GM12878 (cell line): ENCODE measurements at regions of chr12 and their contacts with region 1.

Region 1: DNA sequence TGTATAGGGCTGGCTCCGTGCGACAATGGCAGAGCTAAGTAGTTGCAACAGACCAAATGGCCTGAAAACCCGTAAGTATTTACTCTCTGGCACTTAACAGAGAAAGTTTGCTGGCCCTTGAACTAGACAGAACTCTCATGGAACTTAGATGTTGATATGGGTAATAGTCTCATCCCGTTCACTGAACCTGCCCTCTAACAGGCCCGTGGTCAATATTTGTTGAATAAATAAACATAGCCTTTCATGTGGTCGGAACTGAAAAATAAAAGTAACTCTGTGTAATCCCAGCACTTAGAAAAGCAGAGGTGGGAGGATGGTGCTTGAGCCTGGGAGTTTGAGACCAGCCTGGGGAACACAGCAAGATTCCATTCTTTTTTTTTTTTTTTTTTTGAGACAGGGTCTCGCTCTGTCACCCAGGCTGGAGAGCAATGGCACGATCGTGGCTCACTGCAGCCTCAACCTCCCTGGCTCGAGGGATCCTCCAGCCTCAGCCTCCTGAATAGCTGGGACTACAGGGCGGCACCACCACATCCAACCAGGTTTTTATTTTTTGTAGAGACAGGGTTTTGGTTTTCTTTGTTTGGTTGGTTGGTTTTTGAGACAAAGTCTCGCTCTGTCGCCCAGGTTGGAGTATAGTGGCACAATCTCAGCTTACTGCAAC is 29.7 kb downstream of the KDM2B start:
- DNase-seq: no peak
- ATAC-seq: peak; percentile 23
- H3K4me3 ChIP-seq: no peak overlapping the region
- H3K27ac ChIP-seq: no peak overlapping the region
- H3K4me1 ChIP-seq: peaks cover 25% of the 10 kb centered on the region
- H3K27me3 ChIP-seq: no peaks in the 10 kb centered on the region
- CTCF ChIP-seq: no peak
- EP300 ChIP-seq: no peak
- POLR2A ChIP-seq: no peak
- RAD21 ChIP-seq: no peak

Region 2: GRCh38 chr12:121190523-121191031 is 360.5 kb before region 1 on chr12:
- CTCF ChIA-PET with region 1: no interaction called
- POLR2A ChIA-PET with region 1: no interaction called
- RAD21 ChIA-PET with region 1: no interaction called
- SMC1A ChIA-PET with region 1: no interaction called
- in situ Hi-C with region 1: no loop called
- intact Hi-C with region 1: no loop called
- DNase-seq: no peak
- ATAC-seq: peak; percentile 65
- H3K4me3 ChIP-seq: no peak overlapping the region
- H3K27ac ChIP-seq: no peak overlapping the region
- H3K4me1 ChIP-seq: peaks cover 5% of the 10 kb centered on the region
- H3K27me3 ChIP-seq: no peaks in the 10 kb centered on the region
- CTCF ChIP-seq: no peak
- EP300 ChIP-seq: no peak
- POLR2A ChIP-seq: no peak
- RAD21 ChIP-seq: no peak

Region 3: GRCh38 chr12:121287267-121287954 is 263.7 kb before region 1 on chr12:
- CTCF ChIA-PET with region 1: no interaction called
- POLR2A ChIA-PET with region 1: no interaction called
- RAD21 ChIA-PET with region 1: no interaction called
- SMC1A ChIA-PET with region 1: no interaction called
- in situ Hi-C with region 1: no loop called
- intact Hi-C with region 1: no loop called
- DNase-seq: no peak
- ATAC-seq: no peak
- H3K4me3 ChIP-seq: no peak overlapping the region
- H3K27ac ChIP-seq: no peak overlapping the region
- H3K4me1 ChIP-seq: peaks cover 9% of the 10 kb centered on the region
- H3K27me3 ChIP-seq: no peaks in the 10 kb centered on the region
- CTCF ChIP-seq: no peak
- EP300 ChIP-seq: no peak
- POLR2A ChIP-seq: no peak
- RAD21 ChIP-seq: no peak

Region 4: DNA sequence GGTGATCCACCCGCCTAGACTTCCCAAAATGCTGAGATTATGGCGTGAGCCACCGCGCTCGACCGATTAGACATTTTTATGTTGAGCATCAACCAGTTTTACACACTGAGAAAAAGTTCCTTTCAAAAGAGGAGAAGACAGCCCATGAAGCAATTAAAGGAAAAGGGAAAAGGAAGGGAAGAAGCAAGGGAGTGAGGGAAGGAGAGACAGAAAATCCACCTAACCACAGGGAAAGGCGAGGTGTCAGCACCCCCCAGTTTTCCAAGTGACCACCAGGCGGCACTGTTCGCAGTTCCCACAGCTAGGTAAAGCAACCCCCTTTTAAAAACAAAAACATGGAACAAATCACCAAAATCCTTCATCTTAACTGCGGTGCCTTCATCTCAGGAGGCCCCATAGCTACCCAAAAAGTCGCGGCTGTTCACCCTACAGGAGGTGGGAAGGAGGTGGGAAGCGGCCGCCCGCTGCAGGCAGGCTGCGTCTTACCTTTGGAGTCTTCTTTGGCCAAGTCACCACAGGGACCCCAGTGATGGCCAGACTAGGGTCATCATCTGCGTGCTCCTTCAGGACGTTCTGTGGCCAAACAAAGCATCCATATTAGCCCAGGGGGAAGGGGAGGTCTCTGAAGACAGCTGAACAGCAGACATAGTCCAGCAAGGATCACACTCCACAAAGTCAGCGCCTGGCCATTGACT is 56.9 kb before region 1 on chr12:
- CTCF ChIA-PET with region 1: interaction called, 34 read pairs
- POLR2A ChIA-PET with region 1: interaction called, 5 read pairs
- RAD21 ChIA-PET with region 1: interaction called, 13 read pairs
- SMC1A ChIA-PET with region 1: interaction called, 22 read pairs
- in situ Hi-C with region 1: no loop called
- intact Hi-C with region 1: no loop called
- DNase-seq: no peak
- ATAC-seq: peak; percentile 82
- H3K4me3 ChIP-seq: no peak overlapping the region
- H3K27ac ChIP-seq: no peak overlapping the region
- H3K4me1 ChIP-seq: peaks cover 5% of the 10 kb centered on the region
- H3K27me3 ChIP-seq: no peaks in the 10 kb centered on the region
- CTCF ChIP-seq: peak; percentile 70 to 96 (median 95)
- EP300 ChIP-seq: no peak
- POLR2A ChIP-seq: no peak
- RAD21 ChIP-seq: peak; percentile 58

Region 5: DNA sequence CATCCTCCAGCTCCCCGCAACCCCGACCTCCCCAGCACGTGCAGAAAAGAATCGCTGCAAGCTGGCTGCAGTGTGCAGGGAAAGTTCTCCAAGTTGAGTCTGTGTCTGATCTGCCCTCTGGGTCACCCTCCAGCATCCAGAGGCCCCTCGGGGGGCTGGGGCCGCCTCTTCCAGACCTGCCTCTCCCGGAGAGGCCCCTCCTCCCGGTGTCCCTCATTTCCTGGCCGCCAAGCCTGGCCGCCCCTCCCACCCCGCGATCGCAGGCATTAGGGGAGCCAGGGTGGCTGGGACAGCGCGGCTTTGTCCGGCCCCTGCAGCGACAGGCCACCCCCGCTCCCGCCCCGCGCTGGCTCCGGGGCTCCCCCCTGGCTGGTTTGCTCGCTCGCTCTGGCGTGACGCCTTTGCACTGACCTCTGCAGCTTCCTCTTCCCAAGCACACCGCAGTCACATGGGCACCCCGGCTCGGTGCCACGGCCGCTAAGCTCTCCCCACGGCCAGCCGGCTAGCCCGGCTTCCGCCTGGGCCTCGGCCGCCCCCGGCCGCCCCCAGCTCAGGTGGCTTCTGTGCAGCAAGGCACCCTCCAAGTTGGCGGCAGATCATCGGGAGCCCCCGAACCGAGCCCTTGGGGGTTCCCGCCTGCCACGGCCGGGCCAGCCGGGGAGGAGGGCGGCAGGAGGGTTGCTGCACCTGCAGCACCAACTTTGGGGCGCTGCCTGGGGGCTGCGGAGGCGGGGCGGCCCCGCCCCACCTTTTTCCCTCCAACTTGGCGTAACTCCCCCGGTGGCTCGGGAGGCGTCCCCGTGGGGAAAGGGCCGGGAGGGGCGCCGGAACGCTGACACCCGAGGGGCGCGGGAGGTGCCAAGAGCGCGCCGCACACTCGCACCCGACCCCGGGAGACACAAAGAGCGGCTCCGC is 13.9 kb before region 1 on chr12:
- CTCF ChIA-PET with region 1: interaction called, 8 read pairs
- POLR2A ChIA-PET with region 1: interaction called, 37 read pairs
- RAD21 ChIA-PET with region 1: interaction called, 10 read pairs
- SMC1A ChIA-PET with region 1: interaction called, 11 read pairs
- in situ Hi-C with region 1: no loop called
- intact Hi-C with region 1: no loop called
- DNase-seq: peak; percentile 82
- ATAC-seq: peak; percentile 81
- H3K4me3 ChIP-seq: peak overlapping the region; percentile 78
- H3K27ac ChIP-seq: peak overlapping the region; percentile 95
- H3K4me1 ChIP-seq: peaks cover 27% of the 10 kb centered on the region
- H3K27me3 ChIP-seq: no peaks in the 10 kb centered on the region
- CTCF ChIP-seq: no peak
- EP300 ChIP-seq: peak in 1 of 2 experiments; percentile 42; a peak in 2 of 4 replicates
- POLR2A ChIP-seq: peak; percentile 91
- RAD21 ChIP-seq: no peak

Region 6: GRCh38 chr12:121579981-121580868 is 29.1 kb after region 1 on chr12:
- CTCF ChIA-PET with region 1: interaction called, 40 read pairs
- POLR2A ChIA-PET with region 1: interaction called, 13 read pairs
- RAD21 ChIA-PET with region 1: interaction called, 26 read pairs
- SMC1A ChIA-PET with region 1: interaction called, 46 read pairs
- in situ Hi-C with region 1: no loop called
- intact Hi-C with region 1: no loop called
- DNase-seq: no peak
- ATAC-seq: peak; percentile 67
- H3K4me3 ChIP-seq: peak overlapping the region; percentile 77
- H3K27ac ChIP-seq: peak overlapping the region; percentile 59
- H3K4me1 ChIP-seq: peaks cover 19% of the 10 kb centered on the region
- H3K27me3 ChIP-seq: no peaks in the 10 kb centered on the region
- CTCF ChIP-seq: no peak
- EP300 ChIP-seq: no peak
- POLR2A ChIP-seq: peak; percentile 69
- RAD21 ChIP-seq: no peak

Region 7: DNA sequence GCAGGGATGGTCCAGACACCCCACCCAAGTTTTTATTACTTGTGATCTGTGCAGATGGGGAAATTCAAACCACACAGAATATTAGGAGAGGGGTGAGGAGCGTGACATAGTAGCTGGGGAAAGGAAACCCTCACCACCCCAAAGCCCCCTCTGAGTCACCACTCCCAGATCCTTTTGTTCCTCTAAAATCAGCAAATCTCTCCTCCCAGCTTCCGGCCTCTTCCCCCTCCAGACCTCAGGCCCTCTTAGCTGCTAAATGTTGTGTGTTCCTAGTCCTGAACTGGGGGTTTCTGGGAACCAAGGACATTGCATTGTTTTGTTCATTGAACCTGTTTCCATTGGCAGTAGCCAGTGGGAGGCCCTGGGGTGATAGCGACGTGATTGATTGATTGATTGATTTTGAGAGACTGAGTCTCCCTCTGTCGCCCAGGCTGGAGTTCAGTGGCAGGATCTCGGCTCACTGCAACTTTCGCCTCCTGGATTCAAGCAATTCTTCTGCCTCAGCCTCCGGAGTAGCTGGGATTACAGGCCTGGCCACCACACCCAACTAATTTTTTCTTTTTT is 69.3 kb after region 1 on chr12:
- CTCF ChIA-PET with region 1: interaction called, 80 read pairs
- POLR2A ChIA-PET with region 1: interaction called, 20 read pairs
- RAD21 ChIA-PET with region 1: interaction called, 57 read pairs
- SMC1A ChIA-PET with region 1: interaction called, 60 read pairs
- in situ Hi-C with region 1: no loop called
- intact Hi-C with region 1: loop called (anchors 1 kb)
- DNase-seq: no peak
- ATAC-seq: no peak
- H3K4me3 ChIP-seq: no peak overlapping the region
- H3K27ac ChIP-seq: no peak overlapping the region
- H3K4me1 ChIP-seq: peaks cover 3% of the 10 kb centered on the region
- H3K27me3 ChIP-seq: no peaks in the 10 kb centered on the region
- CTCF ChIP-seq: no peak
- EP300 ChIP-seq: no peak
- POLR2A ChIP-seq: no peak
- RAD21 ChIP-seq: no peak

Region 8: GRCh38 chr12:121663610-121663929 is 112.5 kb after region 1 on chr12:
- CTCF ChIA-PET with region 1: interaction called, 76 read pairs
- POLR2A ChIA-PET with region 1: interaction called, 6 read pairs
- RAD21 ChIA-PET with region 1: interaction called, 42 read pairs
- SMC1A ChIA-PET with region 1: interaction called, 55 read pairs
- in situ Hi-C with region 1: no loop called
- intact Hi-C with region 1: loop called (anchors 5 kb)
- DNase-seq: no peak
- ATAC-seq: no peak
- H3K4me3 ChIP-seq: no peak overlapping the region
- H3K27ac ChIP-seq: peak overlapping the region; percentile 99
- H3K4me1 ChIP-seq: peaks cover 20% of the 10 kb centered on the region
- H3K27me3 ChIP-seq: no peaks in the 10 kb centered on the region
- CTCF ChIP-seq: no peak
- EP300 ChIP-seq: no peak
- POLR2A ChIP-seq: no peak
- RAD21 ChIP-seq: no peak

Region 9: DNA sequence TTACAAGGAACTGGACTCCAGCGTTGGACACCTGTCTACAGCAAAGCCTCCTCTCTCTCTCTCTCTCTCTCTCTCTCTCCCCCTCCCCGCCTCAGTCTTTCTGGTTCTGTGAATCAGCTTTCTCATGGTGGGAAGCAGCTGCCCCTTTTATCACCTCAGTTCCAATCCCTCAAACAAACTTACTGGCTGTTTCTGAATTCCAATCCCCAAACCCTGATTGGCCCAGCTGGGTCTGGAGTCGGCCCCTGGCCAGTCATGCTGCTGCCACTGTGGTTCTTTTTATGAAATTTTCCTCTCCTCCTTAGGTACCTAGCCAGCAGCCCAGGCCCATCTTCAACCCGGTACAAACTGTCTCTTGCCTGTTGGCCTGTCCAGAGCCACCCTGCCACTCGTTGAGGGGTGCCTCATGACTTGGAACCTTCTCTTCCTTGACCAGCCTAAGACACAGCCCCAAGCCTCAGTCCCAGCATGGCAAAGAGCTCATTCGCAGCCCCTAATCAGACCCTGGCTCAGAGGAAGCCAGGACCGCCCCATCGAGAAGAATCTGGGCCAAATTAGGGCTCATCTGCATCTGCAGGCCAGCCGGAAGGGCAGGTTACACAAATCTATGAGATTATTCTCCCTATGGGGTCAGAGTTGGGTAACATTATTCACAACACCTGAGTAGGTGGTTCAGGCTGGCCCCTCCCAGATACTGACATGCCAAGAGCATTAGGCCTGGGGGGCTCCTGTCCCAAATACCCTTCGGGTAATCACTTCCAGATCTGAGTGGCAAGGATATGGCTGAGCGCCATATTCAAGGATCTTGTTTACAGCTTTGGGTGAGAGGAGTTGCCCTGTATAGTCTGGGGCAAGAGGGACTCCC is 127.8 kb after region 1 on chr12:
- CTCF ChIA-PET with region 1: interaction called, 26 read pairs
- POLR2A ChIA-PET with region 1: no interaction called
- RAD21 ChIA-PET with region 1: interaction called, 19 read pairs
- SMC1A ChIA-PET with region 1: interaction called, 7 read pairs
- in situ Hi-C with region 1: loop called (anchors 5 kb)
- intact Hi-C with region 1: loop called (anchors 5 kb)
- DNase-seq: no peak
- ATAC-seq: no peak
- H3K4me3 ChIP-seq: no peak overlapping the region
- H3K27ac ChIP-seq: no peak overlapping the region
- H3K4me1 ChIP-seq: no peaks in the 10 kb centered on the region
- H3K27me3 ChIP-seq: no peaks in the 10 kb centered on the region
- CTCF ChIP-seq: no peak
- EP300 ChIP-seq: no peak
- POLR2A ChIP-seq: no peak
- RAD21 ChIP-seq: no peak